ENCODE measurements at regions of chr17 and their contacts with region 1.

Region 1: GRCh38 chr17:79997011-79997660 is 38.5 kb downstream of the TBC1D16 start:
- DNase-seq: peak; percentile 89 to 98 (median 94)
- H3K4me3 ChIP-seq: peak overlapping the region; percentile 39 to 54
- H3K4me3 Mint-ChIP-seq: peak overlapping the region; percentile 79 to 91 (median 82)
- H3K27ac ChIP-seq: peak overlapping the region; percentile 64
- H3K27ac Mint-ChIP-seq: peak overlapping the region; percentile 88 to 98 (median 96)
- H3K4me1 ChIP-seq: peaks cover 51% of the 10 kb centered on the region
- H3K4me1 Mint-ChIP-seq: peaks cover 31 to 52% (median 40%) of the 10 kb centered on the region in 4 donors
- H3K27me3 ChIP-seq: no peaks in the 10 kb centered on the region
- H3K27me3 Mint-ChIP-seq: no peaks in the 10 kb centered on the region

Region 2: DNA sequence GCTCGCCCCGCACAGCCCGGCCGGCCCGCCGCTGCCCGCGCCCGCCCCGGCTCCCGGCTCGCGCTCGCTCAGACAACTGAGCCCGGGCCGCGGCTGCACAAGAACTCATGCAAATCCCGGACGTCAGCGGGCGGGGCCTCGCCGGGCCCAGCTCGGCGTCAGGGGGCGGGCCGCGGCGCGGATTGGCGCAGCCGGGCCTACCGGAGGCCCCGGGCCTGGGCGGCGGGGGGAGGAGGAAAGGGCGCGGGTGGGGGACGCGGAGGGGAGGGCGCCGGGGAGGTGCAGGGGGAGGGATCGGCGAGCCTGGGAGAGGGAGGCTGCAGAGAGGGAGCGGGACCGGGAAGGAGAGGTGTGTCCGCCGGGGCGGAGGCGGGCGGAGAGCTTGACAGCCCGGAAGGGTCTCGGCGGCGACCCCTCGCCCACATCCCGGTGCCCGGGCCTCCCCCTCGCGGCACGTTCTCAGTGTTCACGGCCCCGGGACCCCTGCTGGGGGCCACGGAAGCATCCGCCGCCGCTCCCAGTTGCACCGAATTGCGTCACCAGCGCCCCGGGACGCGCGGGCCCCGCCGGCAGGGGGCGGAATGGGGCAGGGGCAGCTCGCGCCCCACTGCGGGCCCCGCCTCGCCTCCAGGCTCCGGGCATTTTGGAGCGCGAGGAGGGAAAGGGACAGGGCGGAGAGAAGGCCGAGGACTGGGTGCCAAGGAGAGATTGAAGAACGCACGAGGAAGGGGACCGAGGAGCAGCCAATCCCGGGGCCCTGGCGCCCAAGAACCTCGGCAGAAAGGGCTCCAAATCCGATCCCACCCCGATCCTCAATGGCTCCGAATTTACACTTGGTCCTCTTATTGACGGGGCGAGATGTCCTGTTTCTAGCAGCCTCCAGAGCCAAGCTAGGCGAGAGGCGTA is 157.5 kb before region 1 on chr17 and contains the start of gene CBX4:
- CTCF ChIA-PET with region 1: interaction called, 4 read pairs
- POLR2A ChIA-PET with region 1: interaction called, 12 read pairs
- intact Hi-C with region 1: loop called (anchors 2 kb)
- DNase-seq: peak; percentile 85 to 92 (median 87)
- H3K4me3 ChIP-seq: peak within 1 kb of the TSS; percentile 89 to 99
- H3K4me3 Mint-ChIP-seq: peak within 1 kb of the TSS; percentile 91 to 97 (median 96)
- H3K27ac ChIP-seq: peak within 1 kb of the TSS; percentile 52
- H3K27ac Mint-ChIP-seq: peak within 1 kb of the TSS; percentile 89 to 98 (median 95)
- H3K4me1 ChIP-seq: peaks cover 75% of the 10 kb centered on the region
- H3K4me1 Mint-ChIP-seq: peaks cover 12 to 65% (median 40%) of the 10 kb centered on the region in 4 donors
- H3K27me3 ChIP-seq: peaks cover 37% of the 10 kb centered on the region
- H3K27me3 Mint-ChIP-seq: peaks cover 10 to 13% of the 10 kb centered on the region in 2 donors
- total RNA-seq, gene CBX4: 64.7 to 65.7 TPM

Region 3: DNA sequence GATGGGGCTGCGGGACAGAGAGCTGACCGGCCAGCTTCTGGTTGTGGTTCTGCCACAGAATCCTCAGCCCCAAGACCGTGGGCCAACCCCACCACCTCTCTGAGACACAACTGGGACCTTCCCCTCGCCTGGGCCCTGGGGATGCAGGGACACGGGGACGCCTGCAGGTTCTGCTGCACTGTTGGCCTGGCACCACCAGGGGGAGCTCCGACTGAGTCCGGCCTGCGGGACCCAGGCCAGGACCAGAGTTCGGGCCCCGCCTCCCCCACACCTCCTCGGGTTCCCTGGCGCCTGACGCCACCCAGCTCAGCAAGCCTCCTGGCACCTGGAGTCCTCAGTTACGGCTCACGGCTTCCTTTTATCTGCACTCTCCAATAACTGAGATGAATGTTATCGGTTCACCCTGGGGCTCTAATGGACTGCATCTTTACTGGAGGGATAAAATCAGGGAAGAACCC is 11.3 kb after region 1 on chr17:
- CTCF ChIA-PET with region 1: interaction called, 41 read pairs
- POLR2A ChIA-PET with region 1: interaction called, 12 read pairs
- intact Hi-C with region 1: no loop called
- DNase-seq: peak; percentile 54 to 72 (median 62)
- H3K4me3 ChIP-seq: no peak overlapping the region
- H3K4me3 Mint-ChIP-seq: peak overlapping the region in 1 of 8 donors; percentile 6
- H3K27ac ChIP-seq: no peak overlapping the region
- H3K27ac Mint-ChIP-seq: no peak overlapping the region
- H3K4me1 ChIP-seq: peaks cover 6% of the 10 kb centered on the region
- H3K4me1 Mint-ChIP-seq: peaks cover 1 to 14% (median 6%) of the 10 kb centered on the region in 4 donors
- H3K27me3 ChIP-seq: no peaks in the 10 kb centered on the region
- H3K27me3 Mint-ChIP-seq: no peaks in the 10 kb centered on the region

Region 4: GRCh38 chr17:80035943-80036714 is 39.0 kb after region 1 on chr17 and contains the start of gene CCDC40:
- CTCF ChIA-PET with region 1: interaction called, 3 read pairs
- POLR2A ChIA-PET with region 1: interaction called, 8 read pairs
- intact Hi-C with region 1: loop called (anchors 1 kb)
- DNase-seq: peak; percentile 82 to 87 (median 84)
- H3K4me3 ChIP-seq: peak within 1 kb of the TSS; percentile 34 to 75
- H3K4me3 Mint-ChIP-seq: peak within 1 kb of the TSS; percentile 79 to 92 (median 86)
- H3K27ac ChIP-seq: peak within 1 kb of the TSS; percentile 58
- H3K27ac Mint-ChIP-seq: peak within 1 kb of the TSS; percentile 86 to 97 (median 92)
- H3K4me1 ChIP-seq: peaks cover 13% of the 10 kb centered on the region
- H3K4me1 Mint-ChIP-seq: peaks cover 6 to 18% (median 10%) of the 10 kb centered on the region in 4 donors
- H3K27me3 ChIP-seq: peaks cover 6% of the 10 kb centered on the region
- H3K27me3 Mint-ChIP-seq: peaks cover 1 to 7% of the 10 kb centered on the region in 2 donors
- total RNA-seq, gene CCDC40: 0.28 to 1.3 TPM

Measured in CD4-positive, alpha-beta memory T cell (primary cell).